ENCODE measurements at regions of chr5 and their contacts with region 1.

Region 1: GRCh38 chr5:68343421-68343826 is 127.9 kb downstream of the PIK3R1 start:
- DNase-seq: peak; percentile 69 to 75
- ATAC-seq: peak; percentile 91
- H3K4me3 ChIP-seq: no peak overlapping the region
- H3K27ac ChIP-seq: peak overlapping the region; percentile 84 to 89
- H3K4me1 ChIP-seq: peaks cover 4 to 10% of the 10 kb centered on the region in 2 donors
- H3K27me3 ChIP-seq: no peaks in the 10 kb centered on the region

Region 2: DNA sequence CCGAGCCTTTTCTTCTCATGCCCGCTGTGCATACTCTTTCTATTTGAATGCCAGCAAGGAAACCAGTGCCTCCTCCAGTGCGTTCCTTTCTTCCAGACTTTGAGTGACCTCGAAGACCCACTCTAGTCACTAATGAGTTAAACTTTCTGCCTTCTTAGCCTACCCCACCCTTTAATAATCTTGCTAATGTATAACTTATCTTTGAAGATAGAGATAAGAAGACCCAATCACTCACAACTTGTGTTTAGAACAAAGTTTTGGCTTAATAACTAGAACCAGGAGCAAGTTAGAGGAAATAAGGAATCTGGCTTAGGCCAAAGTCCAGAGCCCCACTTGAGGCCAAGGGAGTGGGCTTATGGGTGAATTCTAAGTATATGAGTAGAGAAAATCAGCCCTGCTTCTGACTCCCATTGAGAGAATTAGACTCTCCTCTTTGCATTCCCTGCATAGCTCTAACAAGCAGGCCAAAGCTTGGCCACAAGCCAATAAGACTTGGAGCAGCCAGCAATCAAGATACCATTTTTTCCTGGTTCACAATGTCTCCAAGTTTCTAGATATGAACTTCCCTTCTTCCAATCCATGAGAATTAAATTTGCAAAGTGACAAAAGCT is 309.4 kb before region 1 on chr5:
- intact Hi-C with region 1: no loop called
- DNase-seq: peak in 1 of 2 donors; percentile 77
- ATAC-seq: no peak
- H3K4me3 ChIP-seq: no peak overlapping the region
- H3K27ac ChIP-seq: no peak overlapping the region
- H3K4me1 ChIP-seq: peaks cover 0 to 5% of the 10 kb centered on the region in 2 donors
- H3K27me3 ChIP-seq: no peaks in the 10 kb centered on the region

Region 3: GRCh38 chr5:68264024-68264956 is 79.1 kb before region 1 on chr5:
- intact Hi-C with region 1: loop called in 1 of 2 experiments (anchors 2 kb)
- DNase-seq: no peak
- ATAC-seq: peak; percentile 33
- H3K4me3 ChIP-seq: no peak overlapping the region
- H3K27ac ChIP-seq: peak overlapping the region; percentile 64 to 80
- H3K4me1 ChIP-seq: peaks cover 8 to 17% of the 10 kb centered on the region in 2 donors
- H3K27me3 ChIP-seq: no peaks in the 10 kb centered on the region

Region 4: GRCh38 chr5:68287976-68288706 is 55.3 kb before region 1 on chr5:
- intact Hi-C with region 1: loop called in 1 of 2 experiments (anchors 5 kb)
- DNase-seq: peak; percentile 80 to 88
- ATAC-seq: peak; percentile 86
- H3K4me3 ChIP-seq: peak overlapping the region; percentile 11 to 29
- H3K27ac ChIP-seq: peak overlapping the region in 1 of 2 donors; percentile 65
- H3K4me1 ChIP-seq: peaks cover 0 to 3% of the 10 kb centered on the region in 2 donors
- H3K27me3 ChIP-seq: no peaks in the 10 kb centered on the region

Region 5: DNA sequence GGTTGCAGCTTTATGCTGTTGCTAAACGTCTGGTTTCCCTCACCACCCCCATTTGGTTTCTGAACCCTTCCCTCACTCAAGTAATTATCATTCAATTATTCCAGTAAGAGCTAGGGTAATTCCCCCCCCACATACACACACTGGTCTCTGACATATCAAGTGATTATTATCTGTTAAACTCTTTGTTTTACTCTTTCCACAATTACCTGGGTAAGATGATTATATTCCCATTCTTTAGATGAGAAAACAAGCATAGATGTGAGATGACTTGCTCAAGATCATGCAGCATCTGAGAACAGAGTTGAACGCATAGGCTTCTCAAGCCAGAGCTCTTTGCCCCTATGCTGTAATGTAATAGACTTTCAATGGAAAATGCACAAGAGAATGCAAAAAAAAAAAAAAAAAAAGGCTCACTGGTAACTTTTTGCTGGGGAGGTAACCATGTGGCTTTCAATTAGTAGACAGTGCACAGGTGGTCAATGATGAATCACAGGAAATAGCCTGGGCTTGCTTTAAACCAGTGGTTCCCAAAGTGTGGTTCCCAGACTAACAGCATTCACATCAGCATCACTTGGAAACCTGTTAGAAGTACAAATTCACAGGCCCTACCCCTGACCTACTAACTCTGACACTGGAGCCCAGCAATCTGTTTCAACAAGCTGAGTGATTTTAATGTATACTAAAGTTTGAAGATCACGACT is 40.2 kb before region 1 on chr5:
- intact Hi-C with region 1: loop called in 1 of 2 experiments (anchors 5 kb)
- DNase-seq: no peak
- ATAC-seq: no peak
- H3K4me3 ChIP-seq: no peak overlapping the region
- H3K27ac ChIP-seq: no peak overlapping the region
- H3K4me1 ChIP-seq: peaks cover 1 to 2% of the 10 kb centered on the region in 2 donors
- H3K27me3 ChIP-seq: no peaks in the 10 kb centered on the region

Region 6: GRCh38 chr5:68433923-68434879 is 90.8 kb after region 1 on chr5:
- intact Hi-C with region 1: loop called in 1 of 2 experiments (anchors 10 kb)
- DNase-seq: peak; percentile 93 to 94
- ATAC-seq: peak; percentile 92
- H3K4me3 ChIP-seq: no peak overlapping the region
- H3K27ac ChIP-seq: peak overlapping the region in 1 of 2 donors; percentile 95
- H3K4me1 ChIP-seq: no peaks in the 10 kb centered on the region
- H3K27me3 ChIP-seq: no peaks in the 10 kb centered on the region

Region 7: DNA sequence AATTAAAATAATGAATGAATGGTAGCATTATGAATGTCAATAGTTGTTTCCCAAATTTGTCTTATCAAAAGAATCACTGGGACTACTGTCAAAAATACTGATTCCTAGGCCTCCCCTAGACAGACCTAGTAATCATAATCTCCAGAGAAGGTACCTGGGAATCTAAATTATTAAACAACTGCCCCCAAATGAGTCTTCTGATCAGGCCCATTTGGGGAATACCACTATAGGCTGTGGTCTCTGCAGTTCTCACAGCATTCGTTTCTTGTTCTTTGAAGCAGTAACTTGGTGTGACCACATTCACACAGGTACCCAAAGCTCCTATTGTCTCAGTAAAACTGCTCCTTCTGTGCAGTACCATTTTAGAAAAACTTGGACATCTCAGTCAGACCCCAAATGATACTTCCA is 103.1 kb after region 1 on chr5:
- intact Hi-C with region 1: no loop called
- DNase-seq: no peak
- ATAC-seq: no peak
- H3K4me3 ChIP-seq: no peak overlapping the region
- H3K27ac ChIP-seq: no peak overlapping the region
- H3K4me1 ChIP-seq: peaks cover 0 to 2% of the 10 kb centered on the region in 2 donors
- H3K27me3 ChIP-seq: no peaks in the 10 kb centered on the region

Region 8: GRCh38 chr5:68505917-68506860 is 162.8 kb after region 1 on chr5:
- intact Hi-C with region 1: no loop called
- DNase-seq: no peak
- ATAC-seq: no peak
- H3K4me3 ChIP-seq: no peak overlapping the region
- H3K27ac ChIP-seq: no peak overlapping the region
- H3K4me1 ChIP-seq: no peaks in the 10 kb centered on the region
- H3K27me3 ChIP-seq: no peaks in the 10 kb centered on the region